ENCODE measurements at regions of chr12 and their contacts with region 1.

Region 1: DNA sequence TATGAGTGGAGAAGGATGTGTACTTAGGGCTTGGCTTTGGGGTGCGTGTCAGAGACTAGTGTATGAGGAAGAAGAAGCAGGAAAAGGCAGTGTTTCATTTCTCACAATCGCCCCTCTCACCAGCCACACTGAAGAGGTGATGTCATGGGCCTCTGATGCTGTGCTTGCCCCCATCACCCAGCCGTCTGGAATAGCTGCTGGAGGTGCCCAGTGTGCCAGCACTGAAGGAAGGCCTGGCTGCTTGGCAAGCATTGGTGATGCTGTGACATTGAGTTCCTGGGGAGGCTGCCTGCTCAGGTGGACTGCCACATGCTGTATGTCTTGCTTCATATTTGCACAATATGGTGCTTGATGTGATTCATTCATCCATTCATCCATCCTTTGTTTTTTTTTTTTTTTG is 56.2 kb downstream of the CRADD start:
- DNase-seq: no peak
- ATAC-seq: no peak
- H3K4me3 ChIP-seq: no peak overlapping the region
- H3K4me3 Mint-ChIP-seq: no peak overlapping the region
- H3K27ac ChIP-seq: no peak overlapping the region
- H3K27ac Mint-ChIP-seq: no peak overlapping the region
- H3K4me1 ChIP-seq: no peaks in the 10 kb centered on the region
- H3K4me1 Mint-ChIP-seq: peaks cover 0 to 25% (median 13%) of the 10 kb centered on the region in 3 donors
- H3K27me3 ChIP-seq: no peaks in the 10 kb centered on the region
- H3K27me3 Mint-ChIP-seq: no peaks in the 10 kb centered on the region

Region 2: DNA sequence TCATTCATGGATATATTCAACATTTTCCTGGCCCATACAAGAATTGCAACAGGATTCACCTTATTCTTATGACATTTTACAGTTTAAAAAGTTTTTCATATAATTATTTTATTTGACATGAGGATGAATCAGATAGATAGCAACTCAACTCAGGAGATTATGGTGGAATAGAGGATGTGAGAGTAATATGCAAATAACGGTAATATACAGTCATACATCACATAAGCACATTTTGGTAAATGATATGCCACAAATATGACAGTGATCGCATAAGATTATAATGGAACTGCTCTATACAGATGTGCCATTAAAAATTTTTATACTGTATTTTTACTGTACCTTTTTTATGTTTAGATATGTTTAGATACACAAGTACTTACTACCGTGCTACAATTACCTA is 80.3 kb before region 1 on chr12:
- CTCF ChIA-PET with region 1: no interaction called
- POLR2A ChIA-PET with region 1: interaction called in 1 of 2 experiments, 10 read pairs
- DNase-seq: no peak
- ATAC-seq: no peak
- H3K4me3 ChIP-seq: no peak overlapping the region
- H3K4me3 Mint-ChIP-seq: no peak overlapping the region
- H3K27ac ChIP-seq: no peak overlapping the region
- H3K27ac Mint-ChIP-seq: no peak overlapping the region
- H3K4me1 ChIP-seq: no peaks in the 10 kb centered on the region
- H3K4me1 Mint-ChIP-seq: no peaks in the 10 kb centered on the region
- H3K27me3 ChIP-seq: peaks cover 0 to 4% of the 10 kb centered on the region in 2 experiments
- H3K27me3 Mint-ChIP-seq: peaks cover 0 to 2% of the 10 kb centered on the region in 2 donors

Region 3: GRCh38 chr12:93677195-93678064 is 55.9 kb before region 1 on chr12 and contains the start of gene CRADD:
- CTCF ChIA-PET with region 1: no interaction called
- POLR2A ChIA-PET with region 1: no interaction called
- DNase-seq: peak; percentile 69 to 99 (median 89)
- ATAC-seq: peak; percentile 94 to 96 (median 94)
- H3K4me3 ChIP-seq: peak within 1 kb of the TSS; percentile 75 to 85
- H3K4me3 Mint-ChIP-seq: peak within 1 kb of the TSS; percentile 93 to 98 (median 96)
- H3K27ac ChIP-seq: peak within 1 kb of the TSS; percentile 98
- H3K27ac Mint-ChIP-seq: peak within 1 kb of the TSS; percentile 99 to 100
- H3K4me1 ChIP-seq: peaks cover 4 to 21% of the 10 kb centered on the region in 2 experiments
- H3K4me1 Mint-ChIP-seq: peaks cover 40 to 45% (median 40%) of the 10 kb centered on the region in 3 donors
- H3K27me3 ChIP-seq: peaks cover 0 to 3% of the 10 kb centered on the region in 2 experiments
- H3K27me3 Mint-ChIP-seq: peaks cover 8 to 17% of the 10 kb centered on the region in 2 donors
- total RNA-seq, gene CRADD: 11.2 to 19.3 (median 12.3) TPM

Region 4: DNA sequence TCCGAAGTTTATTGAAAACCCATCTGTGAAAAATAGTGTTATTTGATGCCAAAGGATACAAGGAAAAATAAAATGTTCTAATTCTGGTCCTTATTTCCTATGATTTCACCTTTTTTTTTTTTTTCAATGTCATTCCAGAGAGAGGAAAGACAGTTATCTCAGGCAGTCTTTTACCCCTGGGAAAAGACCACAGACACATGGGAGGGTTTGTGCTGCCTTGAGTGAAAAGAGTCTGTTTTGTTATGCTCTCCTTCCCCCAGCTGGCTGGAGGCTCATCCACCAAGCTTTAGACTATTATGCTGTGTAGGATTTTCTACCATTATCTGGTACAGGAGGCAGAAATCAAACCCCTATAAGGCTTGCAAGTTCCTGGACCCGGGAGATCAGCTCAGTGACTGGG is 95.7 kb after region 1 on chr12:
- CTCF ChIA-PET with region 1: no interaction called
- POLR2A ChIA-PET with region 1: no interaction called
- DNase-seq: no peak
- ATAC-seq: no peak
- H3K4me3 ChIP-seq: no peak overlapping the region
- H3K4me3 Mint-ChIP-seq: no peak overlapping the region
- H3K27ac ChIP-seq: no peak overlapping the region
- H3K27ac Mint-ChIP-seq: no peak overlapping the region
- H3K4me1 ChIP-seq: no peaks in the 10 kb centered on the region
- H3K4me1 Mint-ChIP-seq: peaks cover 0 to 10% (median 0%) of the 10 kb centered on the region in 3 donors
- H3K27me3 ChIP-seq: no peaks in the 10 kb centered on the region
- H3K27me3 Mint-ChIP-seq: no peaks in the 10 kb centered on the region

Region 5: DNA sequence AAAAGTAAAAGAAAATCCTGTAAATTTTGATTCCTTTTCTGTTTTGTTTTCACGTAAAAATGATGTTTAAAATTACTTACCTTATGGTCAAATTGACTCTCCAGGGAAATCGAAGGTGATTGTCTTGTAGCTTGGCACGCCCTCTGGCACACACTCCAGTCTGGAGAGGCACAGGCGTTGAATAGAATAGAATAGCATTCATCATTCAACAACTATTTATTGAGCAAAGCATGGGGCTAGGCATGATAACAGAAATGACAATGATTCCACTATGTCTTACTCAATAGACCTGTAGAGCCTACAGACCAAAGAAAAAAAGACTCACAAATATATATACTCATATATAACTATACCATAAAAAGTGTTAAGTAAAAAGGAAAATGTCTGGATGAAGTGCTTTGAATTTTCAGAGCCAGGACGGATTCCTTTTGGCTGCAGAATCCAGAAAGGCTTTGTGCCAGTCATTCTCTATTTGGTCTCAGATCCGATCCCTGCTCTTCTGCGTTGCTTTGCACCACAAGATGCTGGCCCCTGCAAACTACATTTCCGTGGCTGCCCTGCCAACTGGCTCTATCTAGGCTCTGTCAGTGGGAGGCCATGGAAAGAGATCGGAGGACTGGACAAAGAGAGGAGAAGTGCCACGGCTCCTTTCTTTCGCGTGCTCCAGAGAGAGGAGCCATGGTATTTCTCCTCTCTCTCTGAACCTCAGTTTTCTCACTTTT is 175.6 kb after region 1 on chr12:
- CTCF ChIA-PET with region 1: no interaction called
- POLR2A ChIA-PET with region 1: no interaction called
- DNase-seq: no peak
- ATAC-seq: no peak
- H3K4me3 ChIP-seq: no peak overlapping the region
- H3K4me3 Mint-ChIP-seq: no peak overlapping the region
- H3K27ac ChIP-seq: no peak overlapping the region
- H3K27ac Mint-ChIP-seq: no peak overlapping the region
- H3K4me1 ChIP-seq: no peaks in the 10 kb centered on the region
- H3K4me1 Mint-ChIP-seq: no peaks in the 10 kb centered on the region
- H3K27me3 ChIP-seq: peaks cover 0 to 3% of the 10 kb centered on the region in 2 experiments
- H3K27me3 Mint-ChIP-seq: no peaks in the 10 kb centered on the region

Region 6: DNA sequence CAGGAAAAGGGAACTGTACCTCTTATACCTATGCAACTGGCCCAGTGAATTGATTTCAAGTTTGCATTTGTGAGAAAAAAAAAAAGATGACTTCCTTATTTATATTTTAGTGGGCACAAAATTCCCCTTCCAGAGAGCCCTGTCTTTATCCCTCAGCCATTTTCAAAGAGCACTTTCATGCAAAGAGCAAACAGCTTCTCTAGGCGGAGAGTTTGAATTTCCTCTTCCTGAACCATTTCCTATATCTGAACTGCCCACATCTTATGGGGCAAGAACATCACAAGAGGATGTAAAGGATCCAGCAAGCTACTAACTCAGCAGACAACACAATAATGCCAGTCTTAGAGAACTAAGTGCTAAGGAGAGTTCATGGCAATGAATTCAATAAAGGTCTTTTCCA is 392.7 kb after region 1 on chr12:
- CTCF ChIA-PET with region 1: no interaction called
- POLR2A ChIA-PET with region 1: no interaction called
- DNase-seq: peak in 1 of 35 experiments; percentile 16
- ATAC-seq: peak; percentile 25 to 62 (median 32)
- H3K4me3 ChIP-seq: no peak overlapping the region
- H3K4me3 Mint-ChIP-seq: peak overlapping the region in 2 of 3 donors; percentile 5 to 72
- H3K27ac ChIP-seq: peak overlapping the region; percentile 2
- H3K27ac Mint-ChIP-seq: peak overlapping the region; percentile 80 to 84
- H3K4me1 ChIP-seq: peaks cover 15 to 44% of the 10 kb centered on the region in 2 experiments
- H3K4me1 Mint-ChIP-seq: peaks cover 52 to 59% (median 55%) of the 10 kb centered on the region in 3 donors
- H3K27me3 ChIP-seq: no peaks in the 10 kb centered on the region
- H3K27me3 Mint-ChIP-seq: no peaks in the 10 kb centered on the region

Measured in T-cell (primary cell).